GM10248 (cell line): ENCODE measurements at regions of chr3 and their contacts with region 1.

Region 1: GRCh38 chr3:160184655-160185054 is 40.6 kb upstream of the C3orf80 start:
- DNase-seq: no peak
- CTCF ChIP-seq: no peak

Region 2: DNA sequence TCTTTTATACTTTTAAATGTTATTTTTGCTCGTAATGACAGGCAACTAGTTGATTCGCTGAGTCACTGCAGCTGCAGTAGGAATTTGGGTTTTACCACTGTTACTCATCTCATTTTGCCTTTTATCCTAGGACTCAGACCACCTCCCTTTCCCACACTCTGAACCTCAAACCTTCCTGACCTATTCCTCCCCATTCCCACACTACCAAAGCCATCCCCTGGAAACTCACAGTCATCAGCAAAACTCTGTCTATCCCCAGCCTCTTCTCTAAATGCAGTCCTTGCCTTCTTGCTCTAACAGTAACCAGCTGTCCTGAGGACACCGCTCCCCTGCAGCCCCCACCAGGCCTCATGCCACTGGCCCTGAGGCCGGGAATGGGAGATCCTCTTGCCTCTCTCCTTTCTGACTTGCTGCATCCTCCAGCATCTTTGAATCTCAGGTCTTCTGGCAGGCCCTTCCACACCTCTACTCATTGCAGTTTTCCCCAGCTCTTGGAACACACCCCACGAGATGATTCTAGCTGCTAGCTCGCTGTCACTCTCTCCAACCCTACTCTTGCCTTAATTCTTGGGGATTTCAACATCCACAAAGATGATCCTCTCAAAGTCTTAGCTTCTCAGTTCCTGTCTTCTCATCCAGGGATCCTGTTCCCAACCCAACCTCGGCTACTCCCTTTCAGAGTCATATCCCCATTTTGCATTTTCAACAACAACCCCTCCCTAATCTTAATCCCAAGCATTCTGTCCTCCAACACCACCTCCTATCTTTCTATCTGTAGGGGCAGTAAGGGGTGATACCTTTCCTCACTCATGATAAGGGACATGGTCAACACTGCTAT is 15.3 kb before region 1 on chr3:
- CTCF ChIA-PET with region 1: interaction called, 11 read pairs
- POLR2A ChIA-PET with region 1: no interaction called
- DNase-seq: no peak
- CTCF ChIP-seq: no peak